Vagina (tissue), 2 donors: ENCODE measurements at regions of chr2 and their contacts with region 1.

Region 1: GRCh38 chr2:32235315-32235714 is 29.4 kb downstream of the NLRC4 start:
- DNase-seq: no peak
- H3K4me3 ChIP-seq: no peak overlapping the region
- H3K27ac ChIP-seq: no peak overlapping the region
- H3K4me1 ChIP-seq: no peaks in the 10 kb centered on the region
- H3K27me3 ChIP-seq: no peaks in the 10 kb centered on the region
- CTCF ChIP-seq: no peak
- POLR2A ChIP-seq: no peak

Region 2: DNA sequence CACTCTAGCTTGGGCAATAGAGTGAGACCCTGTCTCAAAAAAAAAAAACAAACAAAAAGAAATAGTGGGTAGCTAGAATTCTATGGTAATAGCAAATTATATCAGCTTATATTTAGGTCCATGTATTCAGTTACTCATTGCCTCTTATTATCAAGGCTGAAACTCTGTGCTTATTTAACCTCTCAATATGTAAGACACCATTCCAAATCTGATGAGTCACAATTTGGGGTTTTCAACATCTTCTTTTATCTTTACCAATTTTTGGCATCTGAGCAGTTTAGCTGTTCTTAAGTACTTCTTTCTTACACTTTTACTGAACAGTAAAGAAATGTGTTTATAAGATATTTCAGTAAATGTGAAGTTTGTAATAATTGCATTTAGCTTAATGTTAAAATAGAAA is 461.8 kb after region 1 on chr2:
- intact Hi-C with region 1: loop called (anchors 10 kb)
- DNase-seq: no peak
- H3K4me3 ChIP-seq: no peak overlapping the region
- H3K27ac ChIP-seq: no peak overlapping the region
- H3K4me1 ChIP-seq: no peaks in the 10 kb centered on the region
- H3K27me3 ChIP-seq: no peaks in the 10 kb centered on the region
- CTCF ChIP-seq: no peak
- POLR2A ChIP-seq: no peak